Activated CD8-positive, alpha-beta T cell treated with anti-CD3 and anti-CD28 coated beads for 36 hours (primary cell): ENCODE measurements at regions of chr6 and their contacts with region 1.

Region 1: DNA sequence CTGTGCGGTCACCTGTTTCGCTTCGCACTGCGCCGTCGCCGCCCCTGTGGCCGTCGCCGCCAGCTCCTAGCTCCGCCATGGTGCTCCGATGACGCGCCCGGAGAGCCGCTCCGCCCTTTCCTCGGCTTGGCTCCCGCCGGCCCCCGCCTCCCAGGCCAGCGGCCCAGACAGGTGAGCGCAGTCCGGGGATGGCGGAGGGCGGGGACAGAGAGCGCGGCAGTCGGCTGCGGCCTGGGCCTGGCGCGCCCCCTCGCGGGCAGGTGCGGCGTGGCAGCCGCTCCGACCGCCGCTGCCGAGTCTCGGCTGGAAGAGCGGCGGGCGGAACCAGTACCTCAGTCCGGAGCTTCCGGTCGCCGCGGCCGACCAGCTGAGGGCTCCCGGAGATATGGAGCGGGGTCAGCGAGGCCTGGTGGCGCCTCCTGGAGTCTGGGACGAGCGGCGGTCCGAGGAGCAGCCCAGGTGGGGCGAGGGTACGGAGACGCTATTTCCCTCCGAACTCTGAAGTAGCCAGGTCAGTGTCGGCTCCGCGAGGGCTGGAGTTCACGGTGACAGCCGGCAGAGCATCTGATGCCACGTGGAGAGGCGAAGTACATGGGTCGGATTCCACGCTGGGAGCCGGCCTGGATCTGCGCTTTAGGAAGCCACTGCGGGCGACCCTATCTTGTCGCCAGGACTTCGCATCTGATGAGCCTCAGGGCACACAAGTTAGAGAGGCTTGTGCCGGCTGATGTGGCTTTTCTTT is at the start of gene MAP7:
- DNase-seq: peak; percentile 70
- ATAC-seq: peak; percentile 96
- H3K4me3 Mint-ChIP-seq: peak within 1 kb of the TSS; percentile 61
- H3K27ac Mint-ChIP-seq: no peak within 1 kb of the TSS
- H3K4me1 Mint-ChIP-seq: peaks cover 5% of the 10 kb centered on the region
- H3K27me3 Mint-ChIP-seq: peaks cover 28% of the 10 kb centered on the region
- CTCF ChIP-seq: peak; percentile 100
- total RNA-seq, gene MAP7: 0.47 to 0.67 TPM

Region 2: GRCh38 chr6:136378886-136379285 is 171.6 kb before region 1 on chr6:
- CTCF ChIA-PET with region 1: interaction called, 3 read pairs
- POLR2A ChIA-PET with region 1: no interaction called
- intact Hi-C with region 1: loop called (anchors 10 kb)
- DNase-seq: no peak
- ATAC-seq: no peak
- H3K4me3 Mint-ChIP-seq: no peak overlapping the region
- H3K27ac Mint-ChIP-seq: no peak overlapping the region
- H3K4me1 Mint-ChIP-seq: peaks cover 5% of the 10 kb centered on the region
- H3K27me3 Mint-ChIP-seq: peaks cover 4% of the 10 kb centered on the region
- CTCF ChIP-seq: no peak

Region 3: GRCh38 chr6:136477548-136477947 is 73.0 kb before region 1 on chr6:
- CTCF ChIA-PET with region 1: no interaction called
- POLR2A ChIA-PET with region 1: no interaction called
- intact Hi-C with region 1: no loop called
- DNase-seq: no peak
- ATAC-seq: no peak
- H3K4me3 Mint-ChIP-seq: no peak overlapping the region
- H3K27ac Mint-ChIP-seq: no peak overlapping the region
- H3K4me1 Mint-ChIP-seq: no peaks in the 10 kb centered on the region
- H3K27me3 Mint-ChIP-seq: peaks cover 12% of the 10 kb centered on the region
- CTCF ChIP-seq: no peak

Region 4: DNA sequence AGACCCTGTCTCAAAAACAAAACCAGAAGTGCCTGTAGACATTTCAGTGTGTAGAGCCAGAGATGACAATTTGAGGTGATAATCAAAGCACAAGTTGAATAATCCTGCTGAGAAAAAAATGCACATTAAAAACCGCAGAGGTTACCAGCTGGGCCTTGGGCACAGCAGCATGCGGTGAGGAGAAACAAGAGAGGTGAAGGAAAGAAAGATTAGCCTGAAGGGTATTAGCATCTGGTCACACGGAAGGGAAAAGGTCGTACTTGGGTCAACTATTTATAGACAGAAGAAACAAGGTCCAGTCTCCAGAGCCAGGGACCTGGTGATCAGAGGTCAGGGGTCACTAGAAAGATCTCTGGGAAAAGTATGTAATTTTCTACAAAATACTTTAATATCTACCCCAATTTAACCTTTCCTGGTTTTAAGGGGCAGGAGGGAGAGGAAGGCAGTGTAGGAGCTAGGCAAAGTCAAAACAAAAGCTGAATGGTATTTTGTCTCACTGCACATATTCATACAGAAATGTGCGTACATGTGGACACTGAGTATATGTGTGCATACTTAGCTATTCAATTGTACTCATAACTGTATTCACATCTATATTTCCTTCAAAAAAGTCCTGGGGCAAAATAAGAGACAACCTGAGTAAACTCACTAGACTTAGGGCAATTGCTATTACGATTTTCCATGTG is 10.4 kb before region 1 on chr6:
- CTCF ChIA-PET with region 1: interaction called, 12 read pairs
- POLR2A ChIA-PET with region 1: no interaction called
- intact Hi-C with region 1: no loop called
- DNase-seq: no peak
- ATAC-seq: no peak
- H3K4me3 Mint-ChIP-seq: no peak overlapping the region
- H3K27ac Mint-ChIP-seq: no peak overlapping the region
- H3K4me1 Mint-ChIP-seq: no peaks in the 10 kb centered on the region
- H3K27me3 Mint-ChIP-seq: peaks cover 10% of the 10 kb centered on the region
- CTCF ChIP-seq: no peak

Region 5: GRCh38 chr6:136566007-136566496 is 15.6 kb after region 1 on chr6:
- CTCF ChIA-PET with region 1: interaction called, 11 read pairs
- POLR2A ChIA-PET with region 1: interaction called, 3 read pairs
- intact Hi-C with region 1: no loop called
- DNase-seq: no peak
- ATAC-seq: no peak
- H3K4me3 Mint-ChIP-seq: no peak overlapping the region
- H3K27ac Mint-ChIP-seq: no peak overlapping the region
- H3K4me1 Mint-ChIP-seq: peaks cover 5% of the 10 kb centered on the region
- H3K27me3 Mint-ChIP-seq: no peaks in the 10 kb centered on the region
- CTCF ChIP-seq: no peak

Region 6: DNA sequence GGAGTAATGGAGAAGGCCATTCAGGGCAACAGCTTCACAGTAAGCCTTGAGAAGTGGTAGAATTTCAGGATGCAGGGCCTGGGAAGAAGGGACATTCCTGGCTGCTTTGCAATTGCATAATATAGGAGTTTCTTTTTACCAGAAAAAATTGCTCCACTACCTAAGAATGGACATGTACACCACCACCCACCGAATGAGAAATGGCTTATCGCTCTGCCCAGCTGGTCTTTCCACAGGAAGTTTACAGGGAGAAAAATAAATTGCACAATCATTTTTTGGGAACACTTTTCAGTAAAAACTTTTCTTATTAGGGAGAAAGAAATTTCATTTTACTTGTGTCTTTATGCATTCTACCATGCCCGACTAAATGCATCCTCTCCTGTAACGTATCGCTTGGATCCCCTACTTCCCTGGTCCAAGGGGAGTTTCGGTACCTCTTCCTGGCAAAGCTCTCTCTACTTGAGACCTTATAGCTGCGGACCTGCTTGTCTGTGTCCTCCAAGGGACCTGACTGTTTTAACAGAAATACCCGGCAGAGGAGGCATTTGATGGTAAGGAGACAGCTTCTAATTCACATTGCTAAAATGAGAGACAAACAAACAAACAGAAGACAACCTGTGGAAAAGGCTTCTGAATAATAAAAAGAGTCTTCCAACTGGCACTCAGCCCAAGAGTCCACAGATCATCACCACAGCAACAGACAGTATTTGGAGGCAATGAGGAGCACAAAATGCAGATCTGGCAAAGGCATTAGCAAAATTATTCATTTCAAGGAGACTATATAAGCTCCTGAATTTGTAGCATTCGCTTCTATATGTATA is 187.6 kb after region 1 on chr6:
- CTCF ChIA-PET with region 1: no interaction called
- POLR2A ChIA-PET with region 1: no interaction called
- intact Hi-C with region 1: no loop called
- DNase-seq: no peak
- ATAC-seq: no peak
- H3K4me3 Mint-ChIP-seq: no peak overlapping the region
- H3K27ac Mint-ChIP-seq: peak overlapping the region; percentile 4
- H3K4me1 Mint-ChIP-seq: peaks cover 14% of the 10 kb centered on the region
- H3K27me3 Mint-ChIP-seq: no peaks in the 10 kb centered on the region
- CTCF ChIP-seq: no peak